ENCODE measurements at regions of chr1 and their contacts with region 1.

Region 1: DNA sequence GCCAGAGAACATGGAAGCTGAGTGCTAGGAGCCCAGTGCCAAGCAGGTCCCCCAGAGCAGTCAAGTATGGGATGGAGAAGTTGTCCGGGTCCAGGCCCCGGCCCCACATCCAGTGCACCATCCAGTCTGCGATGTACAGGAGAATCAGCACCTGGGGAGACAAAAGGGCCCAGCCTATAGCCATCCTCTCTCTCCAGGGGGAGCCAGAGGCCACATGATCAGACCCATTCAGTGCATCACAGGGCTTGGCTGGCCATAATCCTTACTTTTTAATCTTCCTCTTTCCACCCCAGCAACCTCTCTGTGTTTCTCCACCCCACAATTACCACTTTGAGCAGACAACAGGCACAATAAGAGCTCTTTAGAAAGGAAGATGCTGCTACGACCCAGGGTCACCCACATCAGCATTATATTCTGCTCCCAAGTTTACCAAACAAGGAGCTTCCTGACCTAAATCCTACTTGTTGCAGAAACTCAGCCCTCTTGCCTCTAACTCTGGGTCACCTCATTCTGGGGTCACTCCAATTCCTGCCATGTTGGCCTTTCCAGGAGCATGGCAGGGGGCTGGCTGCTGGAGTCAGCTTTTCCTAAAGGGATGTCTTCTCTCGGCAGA is 16.4 kb upstream of the RAB29 start:
- DNase-seq: peak; percentile 48
- H3K4me3 Mint-ChIP-seq: no peak overlapping the region
- H3K27ac Mint-ChIP-seq: no peak overlapping the region
- H3K4me1 Mint-ChIP-seq: peaks cover 27% of the 10 kb centered on the region
- H3K27me3 Mint-ChIP-seq: no peaks in the 10 kb centered on the region

Region 2: DNA sequence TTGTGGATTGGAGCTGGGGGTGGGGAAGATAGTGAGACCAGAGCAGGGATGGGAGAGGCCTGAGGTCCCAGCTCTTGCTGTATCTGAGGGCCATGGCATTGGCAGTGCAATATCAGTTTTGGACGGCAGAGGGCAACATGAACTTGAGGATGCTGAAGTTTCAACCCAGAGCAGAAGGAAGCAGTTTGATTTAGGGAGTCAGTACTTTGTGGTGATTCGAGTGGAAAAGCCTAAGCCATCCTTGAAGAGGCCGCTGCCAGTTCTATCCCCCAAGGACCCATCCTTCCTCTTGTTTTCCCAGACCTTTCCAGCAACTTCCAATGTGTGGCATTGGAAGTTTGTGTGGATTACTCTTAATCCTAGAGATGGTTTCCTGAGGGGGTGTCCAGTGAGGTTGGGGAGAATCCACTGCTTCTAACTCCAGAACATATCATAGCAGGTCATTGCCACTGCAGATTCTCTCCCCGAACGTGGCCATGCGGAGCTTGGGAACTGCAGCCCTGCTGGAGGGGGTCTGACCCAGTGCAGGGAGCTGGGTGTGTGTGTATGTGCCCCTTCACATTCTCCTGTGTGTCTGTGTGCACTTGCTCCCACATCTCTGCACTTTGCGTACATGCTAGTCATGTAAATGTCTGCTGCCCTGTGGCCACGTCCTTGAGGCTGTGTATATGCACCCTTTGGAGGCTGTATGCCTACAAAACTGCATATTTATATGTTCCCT is 127.5 kb after region 1 on chr1:
- intact Hi-C with region 1: loop called (anchors 5 kb)
- DNase-seq: peak; percentile 54
- H3K4me3 Mint-ChIP-seq: no peak overlapping the region
- H3K27ac Mint-ChIP-seq: no peak overlapping the region
- H3K4me1 Mint-ChIP-seq: no peaks in the 10 kb centered on the region
- H3K27me3 Mint-ChIP-seq: no peaks in the 10 kb centered on the region

Region 3: GRCh38 chr1:205977402-205978014 is 185.8 kb after region 1 on chr1:
- intact Hi-C with region 1: loop called (anchors 1 kb)
- DNase-seq: peak; percentile 56
- H3K4me3 Mint-ChIP-seq: no peak overlapping the region
- H3K27ac Mint-ChIP-seq: no peak overlapping the region
- H3K4me1 Mint-ChIP-seq: no peaks in the 10 kb centered on the region
- H3K27me3 Mint-ChIP-seq: peaks cover 3% of the 10 kb centered on the region

Measured in activated T-helper 2 cell treated with anti-CD3 and anti-CD28 coated beads, Interferon-gamma antibody, Interleukin-2, Interleukin-4, amounts not matched to agents 10 μg/mL and 5 μg/mL and 100 μg/mL, durations not matched to agents 14 hours and 24 hours and 36 hours (primary cell).